ENCODE measurements at regions of chr2 and their contacts with region 1.

Region 1: GRCh38 chr2:101277113-101277512 is 24.4 kb downstream of the CNOT11 start:
- DNase-seq: peak; percentile 15
- H3K4me3 ChIP-seq: no peak overlapping the region
- H3K27ac ChIP-seq: no peak overlapping the region
- H3K4me1 ChIP-seq: peaks cover 3% of the 10 kb centered on the region
- H3K27me3 ChIP-seq: no peaks in the 10 kb centered on the region
- CTCF ChIP-seq: no peak
- POLR2A ChIP-seq: no peak

Region 2: GRCh38 chr2:101387151-101387807 is 110.2 kb after region 1 on chr2 and contains the start of gene CREG2:
- CTCF ChIA-PET with region 1: interaction called, 13 read pairs
- POLR2A ChIA-PET with region 1: no interaction called
- dilution Hi-C with region 1: no loop called
- intact Hi-C with region 1: no loop called
- DNase-seq: peak; percentile 74
- H3K4me3 ChIP-seq: peak within 1 kb of the TSS; percentile 32 to 54 (median 43)
- H3K27ac ChIP-seq: no peak within 1 kb of the TSS
- H3K4me1 ChIP-seq: peaks cover 19% of the 10 kb centered on the region
- H3K27me3 ChIP-seq: peaks cover 36 to 46% of the 10 kb centered on the region in 2 experiments
- CTCF ChIP-seq: peak; percentile 53 to 61
- POLR2A ChIP-seq: no peak
- total RNA-seq, gene CREG2: 0.88 and 2.0 TPM in 2 replicates

Measured in endothelial cell of umbilical vein (primary cell).